PC-9 (cell line): ENCODE measurements at regions of chr1 and their contacts with region 1.

Region 1: GRCh38 chr1:119594376-119594775 is 53.7 kb downstream of the ZNF697 start:
- DNase-seq: peak; percentile 10 to 62
- H3K4me3 ChIP-seq: no peak overlapping the region
- H3K27ac ChIP-seq: no peak overlapping the region
- H3K4me1 ChIP-seq: no peaks in the 10 kb centered on the region
- H3K27me3 ChIP-seq: no peaks in the 10 kb centered on the region
- CTCF ChIP-seq: no peak

Region 2: DNA sequence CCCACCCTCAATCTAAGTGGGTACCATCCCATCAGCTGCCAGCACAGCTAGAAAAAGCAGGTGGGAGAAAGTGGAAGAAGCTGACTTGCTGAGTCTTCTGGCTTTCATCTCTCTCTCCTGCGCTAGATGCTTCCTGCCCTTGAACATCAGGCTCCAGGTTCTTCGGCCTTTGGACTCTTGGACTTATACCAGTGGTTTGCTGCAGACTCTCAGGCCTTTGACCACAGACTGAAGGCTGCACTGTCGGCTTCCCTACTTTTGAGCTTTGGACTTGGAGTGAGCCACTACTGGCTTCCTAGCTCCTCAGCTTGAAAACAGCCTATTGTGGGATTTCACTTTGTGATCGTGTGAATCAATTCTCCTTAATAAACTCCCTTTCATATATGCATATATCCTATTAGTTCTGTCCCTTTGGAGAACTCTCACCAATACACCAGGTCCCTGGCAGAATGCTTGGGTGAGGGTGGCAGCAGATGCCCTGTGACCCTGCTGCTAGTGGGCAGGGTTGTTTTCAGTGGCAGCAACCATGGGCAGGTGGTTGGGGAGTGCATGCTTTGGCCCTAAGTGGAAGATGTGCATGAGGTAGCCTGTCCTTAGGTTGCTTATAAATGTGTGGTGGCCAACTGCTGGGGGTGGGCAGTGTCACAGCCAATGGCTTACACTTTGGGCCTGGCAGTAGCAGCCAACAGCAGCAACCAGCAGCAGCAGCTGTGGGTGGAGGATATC is 312.7 kb after region 1 on chr1:
- CTCF ChIA-PET with region 1: no interaction called
- POLR2A ChIA-PET with region 1: interaction called, 11 read pairs
- intact Hi-C with region 1: no loop called
- DNase-seq: no peak
- H3K4me3 ChIP-seq: no peak overlapping the region
- H3K27ac ChIP-seq: no peak overlapping the region
- H3K4me1 ChIP-seq: no peaks in the 10 kb centered on the region
- H3K27me3 ChIP-seq: no peaks in the 10 kb centered on the region
- CTCF ChIP-seq: no peak